ENCODE measurements at regions of chrX and their contacts with region 1.

Region 1: GRCh38 chrX:51281758-51282318 is 50.8 kb upstream of the NUDT10 start:
- DNase-seq: no peak
- H3K4me3 ChIP-seq: no peak overlapping the region
- H3K4me1 ChIP-seq: no peaks in the 10 kb centered on the region
- H3K27me3 ChIP-seq: no peaks in the 10 kb centered on the region

Region 2: GRCh38 chrX:51395810-51396728 is 114.2 kb after region 1 on chrX:
- in situ Hi-C with region 1: loop called (anchors 25 kb)
- DNase-seq: peak; percentile 46 to 73
- H3K4me3 ChIP-seq: peak overlapping the region; percentile 43
- H3K4me1 ChIP-seq: peaks cover 2% of the 10 kb centered on the region; the same call in 1 of the 2 replicates
- H3K27me3 ChIP-seq: no peaks in the 10 kb centered on the region

Measured in HAP-1 (cell line).